GM13977 (cell line): ENCODE measurements at regions of chr2 and their contacts with region 1.

Region 1: GRCh38 chr2:101151141-101151858 is at the start of gene TBC1D8:
- DNase-seq: peak; percentile 93
- CTCF ChIP-seq: no peak

Region 2: GRCh38 chr2:100976645-100977391 is 174.5 kb before region 1 on chr2:
- in situ Hi-C with region 1: no loop called
- DNase-seq: peak; percentile 71
- CTCF ChIP-seq: no peak

Region 3: DNA sequence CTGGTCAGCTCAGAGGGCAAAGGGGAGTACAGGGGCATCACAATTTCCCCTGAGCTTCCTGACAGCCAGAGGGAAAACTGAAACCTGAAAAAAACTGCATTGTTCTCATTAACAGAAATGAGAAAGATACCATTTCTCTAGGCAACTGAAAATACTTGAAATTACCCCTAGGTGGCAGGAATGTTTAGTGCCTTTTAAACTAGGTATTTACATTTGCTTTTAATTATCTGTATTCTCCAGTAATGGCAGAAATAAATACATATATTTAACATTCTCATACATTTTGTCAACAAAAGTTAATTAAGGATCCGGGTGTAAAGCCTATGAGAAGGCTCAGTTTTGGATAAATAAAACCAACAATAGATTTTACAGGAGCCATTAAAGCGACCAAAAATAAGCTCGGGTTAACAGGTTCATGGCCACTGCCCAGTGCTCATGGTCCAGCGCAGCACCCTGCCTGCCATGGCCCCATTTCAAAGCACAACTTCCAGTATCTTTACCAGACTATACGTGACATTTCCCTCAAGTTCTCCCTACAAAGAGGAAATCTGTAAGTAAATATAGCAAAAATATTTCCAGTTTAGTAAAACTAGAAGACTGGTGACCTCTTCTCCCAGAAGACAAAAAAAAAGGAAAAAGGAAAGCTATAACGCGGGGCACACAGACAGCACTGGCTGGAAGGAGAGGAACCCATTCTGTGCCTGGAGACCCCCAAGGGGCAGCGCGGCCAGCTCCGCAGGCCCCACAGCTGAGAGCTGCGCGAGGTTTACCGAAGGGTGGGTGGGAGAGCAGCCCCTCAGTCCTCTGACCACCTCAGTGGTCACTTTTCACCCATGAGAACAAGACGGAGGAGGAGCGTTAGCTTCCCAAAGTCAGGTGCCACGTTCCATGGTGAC is 114.5 kb before region 1 on chr2:
- in situ Hi-C with region 1: loop called (anchors 25 kb)
- DNase-seq: peak; percentile 51
- CTCF ChIP-seq: peak; percentile 55